B cell (primary cell): ENCODE measurements at regions of chr22 and their contacts with region 1.

Region 1: GRCh38 chr22:30634471-30635233 is 929 bp upstream of the SLC35E4 start:
- DNase-seq: peak; percentile 92
- ATAC-seq: peak; percentile 52
- H3K4me3 ChIP-seq: peak overlapping the region in 4 of 5 experiments; percentile 52 to 79 (median 65)
- H3K4me3 Mint-ChIP-seq: peak overlapping the region; percentile 88
- H3K27ac ChIP-seq: peak overlapping the region; percentile 82 to 88
- H3K27ac Mint-ChIP-seq: peak overlapping the region; percentile 94
- H3K4me1 ChIP-seq: peaks cover 18 to 28% of the 10 kb centered on the region in 2 donors
- H3K4me1 Mint-ChIP-seq: peaks cover 19% of the 10 kb centered on the region
- H3K27me3 ChIP-seq: no peaks in the 10 kb centered on the region
- H3K27me3 Mint-ChIP-seq: no peaks in the 10 kb centered on the region
- CTCF ChIP-seq: peak; percentile 91

Region 2: DNA sequence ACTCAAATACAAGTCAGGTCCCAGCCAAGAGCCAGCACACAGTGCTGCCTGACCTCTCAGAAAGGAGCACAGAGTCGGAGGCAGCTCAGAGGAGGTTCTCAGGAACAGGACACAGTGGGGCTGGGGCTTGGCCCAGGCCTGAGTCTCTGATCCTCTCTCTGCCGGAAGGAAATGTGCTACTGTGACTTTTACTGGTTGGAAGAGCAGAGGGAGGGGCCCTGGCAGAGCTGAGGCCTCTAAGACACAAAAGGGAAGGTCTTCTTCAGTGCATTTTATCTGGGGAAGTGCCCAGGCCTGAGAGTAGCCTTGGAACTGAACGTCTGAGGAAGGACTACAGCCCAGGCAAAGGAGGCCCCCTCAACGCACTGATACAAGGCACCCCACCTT is 329.1 kb before region 1 on chr22:
- CTCF ChIA-PET with region 1: no interaction called
- POLR2A ChIA-PET with region 1: no interaction called
- intact Hi-C with region 1: no loop called
- DNase-seq: peak; percentile 75
- ATAC-seq: peak; percentile 59
- H3K4me3 ChIP-seq: peak overlapping the region; percentile 17 to 55 (median 43)
- H3K4me3 Mint-ChIP-seq: peak overlapping the region; percentile 80
- H3K27ac ChIP-seq: peak overlapping the region; percentile 73 to 86
- H3K27ac Mint-ChIP-seq: peak overlapping the region; percentile 89
- H3K4me1 ChIP-seq: peaks cover 100% of the 10 kb centered on the region in 2 donors
- H3K4me1 Mint-ChIP-seq: peaks cover 99% of the 10 kb centered on the region
- H3K27me3 ChIP-seq: no peaks in the 10 kb centered on the region
- H3K27me3 Mint-ChIP-seq: no peaks in the 10 kb centered on the region
- CTCF ChIP-seq: no peak

Region 3: GRCh38 chr22:30606455-30607299 is 28.0 kb before region 1 on chr22 and contains the start of gene TCN2:
- CTCF ChIA-PET with region 1: interaction called, 7 read pairs
- POLR2A ChIA-PET with region 1: interaction called, 3 read pairs
- intact Hi-C with region 1: loop called (anchors 2 kb)
- DNase-seq: peak; percentile 38
- ATAC-seq: peak; percentile 55
- H3K4me3 ChIP-seq: peak within 1 kb of the TSS; percentile 26 to 70 (median 59)
- H3K4me3 Mint-ChIP-seq: peak within 1 kb of the TSS; percentile 90
- H3K27ac ChIP-seq: no peak within 1 kb of the TSS
- H3K27ac Mint-ChIP-seq: peak within 1 kb of the TSS; percentile 64
- H3K4me1 ChIP-seq: peaks cover 18 to 42% of the 10 kb centered on the region in 2 donors
- H3K4me1 Mint-ChIP-seq: peaks cover 29% of the 10 kb centered on the region
- H3K27me3 ChIP-seq: no peaks in the 10 kb centered on the region
- H3K27me3 Mint-ChIP-seq: peaks cover 15% of the 10 kb centered on the region
- CTCF ChIP-seq: no peak
- total RNA-seq, gene TCN2: 0.19 and 0.37 TPM in 2 replicates

Region 4: GRCh38 chr22:30667494-30668385 is 33.1 kb after region 1 on chr22 and contains the start of gene DUSP18:
- CTCF ChIA-PET with region 1: interaction called, 35 read pairs
- POLR2A ChIA-PET with region 1: interaction called, 10 read pairs
- intact Hi-C with region 1: loop called (anchors 1 kb)
- DNase-seq: peak; percentile 96
- ATAC-seq: peak; percentile 93
- H3K4me3 ChIP-seq: peak within 1 kb of the TSS; percentile 81 to 93 (median 86)
- H3K4me3 Mint-ChIP-seq: peak within 1 kb of the TSS; percentile 98
- H3K27ac ChIP-seq: peak within 1 kb of the TSS; percentile 18 to 53
- H3K27ac Mint-ChIP-seq: peak within 1 kb of the TSS; percentile 92
- H3K4me1 ChIP-seq: peaks cover 12 to 17% of the 10 kb centered on the region in 2 donors
- H3K4me1 Mint-ChIP-seq: peaks cover 21% of the 10 kb centered on the region
- H3K27me3 ChIP-seq: peaks cover 0 to 6% (median 0%) of the 10 kb centered on the region in 4 experiments
- H3K27me3 Mint-ChIP-seq: no peaks in the 10 kb centered on the region
- CTCF ChIP-seq: peak; percentile 41
- total RNA-seq, gene DUSP18: 18.7 and 20.6 TPM in 2 replicates

Region 5: DNA sequence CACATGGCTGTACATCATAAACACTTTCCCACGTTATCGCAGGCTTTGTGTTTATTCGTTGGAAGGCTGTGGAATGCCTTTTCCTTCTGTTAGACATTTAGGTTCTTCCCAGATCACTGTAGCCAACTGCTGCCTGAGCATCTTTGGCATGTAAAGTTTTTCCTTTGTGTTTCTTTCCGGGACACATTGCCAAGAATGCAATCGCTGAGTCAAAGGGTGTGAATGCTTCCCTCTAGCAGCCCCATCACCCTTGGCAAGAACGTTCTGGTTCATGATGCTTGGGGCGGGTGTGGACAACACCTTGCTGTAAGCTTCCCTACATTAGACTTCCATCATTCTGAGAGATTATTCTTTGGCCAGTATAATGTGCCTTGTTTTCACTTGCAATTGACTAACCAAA is 196.3 kb after region 1 on chr22:
- CTCF ChIA-PET with region 1: no interaction called
- POLR2A ChIA-PET with region 1: no interaction called
- intact Hi-C with region 1: no loop called
- DNase-seq: no peak
- ATAC-seq: no peak
- H3K4me3 ChIP-seq: no peak overlapping the region
- H3K4me3 Mint-ChIP-seq: no peak overlapping the region
- H3K27ac ChIP-seq: no peak overlapping the region
- H3K27ac Mint-ChIP-seq: no peak overlapping the region
- H3K4me1 ChIP-seq: no peaks in the 10 kb centered on the region
- H3K4me1 Mint-ChIP-seq: no peaks in the 10 kb centered on the region
- H3K27me3 ChIP-seq: peaks cover 0 to 3% (median 0%) of the 10 kb centered on the region in 4 experiments
- H3K27me3 Mint-ChIP-seq: peaks cover 44% of the 10 kb centered on the region
- CTCF ChIP-seq: no peak

Region 6: GRCh38 chr22:30890686-30891442 is 256.2 kb after region 1 on chr22:
- CTCF ChIA-PET with region 1: interaction called, 23 read pairs
- POLR2A ChIA-PET with region 1: interaction called, 3 read pairs
- intact Hi-C with region 1: no loop called
- DNase-seq: peak; percentile 35
- ATAC-seq: peak; percentile 39
- H3K4me3 ChIP-seq: no peak overlapping the region
- H3K4me3 Mint-ChIP-seq: no peak overlapping the region
- H3K27ac ChIP-seq: no peak overlapping the region
- H3K27ac Mint-ChIP-seq: no peak overlapping the region
- H3K4me1 ChIP-seq: no peaks in the 10 kb centered on the region
- H3K4me1 Mint-ChIP-seq: no peaks in the 10 kb centered on the region
- H3K27me3 ChIP-seq: no peaks in the 10 kb centered on the region
- H3K27me3 Mint-ChIP-seq: no peaks in the 10 kb centered on the region
- CTCF ChIP-seq: peak; percentile 74

Region 7: DNA sequence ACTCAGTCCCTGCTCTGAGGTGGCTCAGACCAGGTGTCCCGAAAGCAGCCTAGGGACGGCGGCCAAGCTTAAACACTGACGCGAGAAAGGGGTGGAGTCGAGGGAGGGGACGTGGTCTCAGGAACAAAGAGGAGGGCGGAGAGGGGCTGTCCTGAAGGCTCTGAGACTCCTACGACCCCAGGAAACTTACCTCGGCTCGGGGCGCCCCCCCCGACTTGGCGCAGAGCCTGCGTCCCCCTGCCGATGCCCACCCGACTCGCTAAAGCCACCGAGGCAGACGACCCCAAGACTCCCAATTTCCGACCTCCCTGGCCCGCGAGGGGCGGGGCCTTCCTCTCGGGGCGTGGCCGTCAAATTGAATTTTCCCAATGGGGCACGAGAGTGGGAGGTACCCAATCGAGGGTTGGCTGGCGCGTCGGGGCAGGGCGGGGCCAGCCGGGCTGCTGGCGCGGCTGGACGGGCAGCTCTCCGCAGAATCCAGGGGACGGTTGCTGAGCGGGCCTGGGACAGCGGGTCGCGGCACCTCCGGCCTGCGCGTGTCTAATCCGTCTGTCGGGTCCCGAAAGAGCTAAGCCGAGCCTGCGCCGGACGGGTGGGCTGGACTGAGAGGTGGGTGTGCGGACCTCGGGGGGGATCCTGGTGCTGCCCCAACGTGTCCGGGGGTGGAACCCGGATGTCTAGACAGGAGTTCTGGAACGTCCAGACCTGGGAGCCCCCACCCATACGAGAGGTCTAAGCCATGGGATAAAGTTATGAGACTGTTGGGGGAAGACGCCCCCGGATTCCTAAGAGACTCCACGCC is 446.4 kb after region 1 on chr22 and contains the start of gene SMTN:
- CTCF ChIA-PET with region 1: interaction called, 11 read pairs
- POLR2A ChIA-PET with region 1: interaction called, 4 read pairs
- intact Hi-C with region 1: no loop called
- DNase-seq: peak; percentile 93
- ATAC-seq: peak; percentile 77
- H3K4me3 ChIP-seq: peak within 1 kb of the TSS; percentile 8 to 75 (median 67)
- H3K4me3 Mint-ChIP-seq: peak within 1 kb of the TSS; percentile 92
- H3K27ac ChIP-seq: no peak within 1 kb of the TSS
- H3K27ac Mint-ChIP-seq: peak within 1 kb of the TSS; percentile 58
- H3K4me1 ChIP-seq: peaks cover 22 to 50% of the 10 kb centered on the region in 2 donors
- H3K4me1 Mint-ChIP-seq: peaks cover 34% of the 10 kb centered on the region
- H3K27me3 ChIP-seq: no peaks in the 10 kb centered on the region
- H3K27me3 Mint-ChIP-seq: no peaks in the 10 kb centered on the region
- CTCF ChIP-seq: no peak
- total RNA-seq, gene SMTN: 4.0 and 4.7 TPM in 2 replicates